Activated CD4-positive, alpha-beta T cell treated with anti-CD3 and anti-CD28 coated beads for 36 hours (primary cell): ENCODE measurements at regions of chr10 and their contacts with region 1.

Region 1: GRCh38 chr10:73874267-73875138 is at the start of gene CAMK2G:
- DNase-seq: peak; percentile 92
- ATAC-seq: peak; percentile 87
- H3K4me3 Mint-ChIP-seq: peak within 1 kb of the TSS; percentile 74
- H3K27ac Mint-ChIP-seq: peak within 1 kb of the TSS; percentile 81
- H3K4me1 Mint-ChIP-seq: peaks cover 67% of the 10 kb centered on the region
- H3K27me3 Mint-ChIP-seq: no peaks in the 10 kb centered on the region
- total RNA-seq, gene CAMK2G: 16.4 to 19.4 TPM

Region 2: GRCh38 chr10:73730153-73730906 is 144.2 kb before region 1 on chr10:
- CTCF ChIA-PET with region 1: no interaction called
- POLR2A ChIA-PET with region 1: no interaction called
- intact Hi-C with region 1: no loop called
- DNase-seq: peak; percentile 95
- ATAC-seq: peak; percentile 93
- H3K4me3 Mint-ChIP-seq: peak overlapping the region; percentile 98
- H3K27ac Mint-ChIP-seq: peak overlapping the region; percentile 97
- H3K4me1 Mint-ChIP-seq: peaks cover 9% of the 10 kb centered on the region
- H3K27me3 Mint-ChIP-seq: no peaks in the 10 kb centered on the region

Region 3: GRCh38 chr10:73848821-73849489 is 25.5 kb before region 1 on chr10:
- CTCF ChIA-PET with region 1: interaction called, 456 read pairs
- POLR2A ChIA-PET with region 1: interaction called, 4 read pairs
- intact Hi-C with region 1: loop called (anchors 1 kb)
- DNase-seq: peak; percentile 95
- ATAC-seq: peak; percentile 99
- H3K4me3 Mint-ChIP-seq: no peak overlapping the region
- H3K27ac Mint-ChIP-seq: peak overlapping the region; percentile 85
- H3K4me1 Mint-ChIP-seq: peaks cover 7% of the 10 kb centered on the region
- H3K27me3 Mint-ChIP-seq: no peaks in the 10 kb centered on the region

Region 4: DNA sequence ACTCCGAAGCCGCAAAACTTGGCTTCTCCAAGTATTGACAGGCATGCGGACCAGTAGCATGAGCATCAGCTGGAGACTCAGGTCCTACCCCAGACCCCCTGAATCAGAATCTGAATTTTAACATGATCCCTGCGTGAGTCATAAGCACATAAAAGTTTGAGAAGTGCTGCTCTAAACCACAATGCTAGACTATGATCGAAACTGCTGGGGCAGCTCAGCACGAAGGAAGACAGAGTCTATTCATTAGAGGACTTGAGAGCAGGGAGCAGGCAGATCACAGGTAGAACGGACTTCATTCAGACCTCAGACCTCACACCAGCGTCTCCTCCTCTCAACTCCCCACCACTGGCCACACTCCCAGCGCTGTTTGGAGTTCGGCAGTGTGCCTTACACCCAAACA is 17.1 kb before region 1 on chr10:
- CTCF ChIA-PET with region 1: interaction called, 456 read pairs
- POLR2A ChIA-PET with region 1: interaction called, 6 read pairs
- intact Hi-C with region 1: loop called (anchors 1 kb)
- DNase-seq: peak; percentile 74
- ATAC-seq: peak; percentile 94
- H3K4me3 Mint-ChIP-seq: peak overlapping the region; percentile 37
- H3K27ac Mint-ChIP-seq: peak overlapping the region; percentile 78
- H3K4me1 Mint-ChIP-seq: peaks cover 60% of the 10 kb centered on the region
- H3K27me3 Mint-ChIP-seq: no peaks in the 10 kb centered on the region

Region 5: DNA sequence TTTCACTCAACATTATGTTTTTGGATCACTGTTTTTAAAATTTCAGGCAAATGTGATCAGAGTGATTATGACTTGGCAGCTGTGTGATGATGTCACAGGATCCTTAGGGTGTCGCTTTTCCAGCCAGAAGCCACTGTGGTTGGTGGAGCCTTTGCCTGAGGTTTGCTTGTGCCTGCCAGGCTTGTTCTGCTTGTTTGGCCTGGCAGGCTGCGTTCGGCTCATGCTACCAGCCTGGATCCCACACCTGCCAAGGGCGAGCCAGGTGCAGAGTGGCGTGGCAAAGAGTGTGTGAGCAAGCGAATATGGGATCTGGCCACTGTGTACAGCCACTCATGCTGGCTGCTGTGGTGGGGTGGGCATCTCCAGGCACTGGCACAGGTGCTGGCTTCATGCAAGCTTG is 332.2 kb after region 1 on chr10:
- CTCF ChIA-PET with region 1: no interaction called
- POLR2A ChIA-PET with region 1: no interaction called
- intact Hi-C with region 1: no loop called
- DNase-seq: no peak
- ATAC-seq: no peak
- H3K4me3 Mint-ChIP-seq: no peak overlapping the region
- H3K27ac Mint-ChIP-seq: no peak overlapping the region
- H3K4me1 Mint-ChIP-seq: peaks cover 4% of the 10 kb centered on the region
- H3K27me3 Mint-ChIP-seq: no peaks in the 10 kb centered on the region